CD4-positive, alpha-beta memory T cell (primary cell): ENCODE measurements at regions of chrX and their contacts with region 1.

Region 1: GRCh38 chrX:54639346-54640102 is 109.5 kb downstream of the GNL3L start:
- DNase-seq: peak; percentile 86 to 97 (median 91)
- H3K4me3 ChIP-seq: peak overlapping the region; percentile 57 to 59
- H3K4me3 Mint-ChIP-seq: peak overlapping the region; percentile 89 to 96 (median 94)
- H3K27ac ChIP-seq: peak overlapping the region; percentile 94
- H3K27ac Mint-ChIP-seq: peak overlapping the region; percentile 98 to 100 (median 99)
- H3K4me1 ChIP-seq: peaks cover 12% of the 10 kb centered on the region
- H3K4me1 Mint-ChIP-seq: peaks cover 2 to 23% (median 9%) of the 10 kb centered on the region in 4 donors
- H3K27me3 ChIP-seq: no peaks in the 10 kb centered on the region
- H3K27me3 Mint-ChIP-seq: no peaks in the 10 kb centered on the region

Region 2: DNA sequence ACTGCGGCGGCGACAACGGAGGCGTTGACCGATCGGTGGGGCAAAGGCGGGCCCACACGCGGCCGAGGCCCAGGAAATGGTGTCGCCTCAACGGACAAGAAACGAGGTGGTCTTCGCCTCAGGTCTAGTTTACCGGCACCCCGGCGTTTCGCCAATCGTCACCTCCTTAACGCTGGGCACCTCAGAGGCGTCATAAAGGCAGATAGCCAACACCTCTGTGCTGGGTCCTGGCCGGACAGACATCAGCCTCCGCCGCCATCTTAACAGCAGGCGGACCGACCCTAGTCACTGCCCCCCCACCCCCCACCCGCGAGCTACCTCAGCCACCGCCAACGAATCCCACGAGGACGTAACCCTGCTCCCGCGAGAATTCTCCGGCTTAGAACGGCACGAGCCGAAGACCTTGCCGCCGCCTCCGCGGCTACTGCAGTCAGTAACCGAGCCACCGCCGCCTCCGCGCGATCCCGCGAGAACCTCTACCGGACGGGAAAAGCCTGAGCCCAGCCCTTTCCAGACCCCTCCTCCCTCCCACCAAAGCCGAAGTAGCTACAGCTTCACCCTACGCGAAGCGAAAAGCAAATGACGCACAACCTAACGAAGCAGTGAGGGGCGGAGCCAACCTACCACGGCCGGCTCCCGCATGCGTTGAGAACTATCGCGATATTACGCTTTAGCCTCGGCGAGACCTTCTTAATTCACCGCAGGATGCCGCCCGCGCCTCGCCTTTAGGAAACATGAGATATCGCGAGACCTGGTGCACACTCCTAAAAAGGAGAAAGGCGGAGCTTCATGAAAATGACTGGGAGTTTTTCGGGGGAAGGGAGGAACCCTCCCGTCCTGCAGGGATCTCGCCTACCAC is 955.7 kb before region 1 on chrX:
- CTCF ChIA-PET with region 1: no interaction called
- POLR2A ChIA-PET with region 1: interaction called, 3 read pairs
- intact Hi-C with region 1: loop called (anchors 10 kb)
- DNase-seq: peak; percentile 88 to 97 (median 95)
- H3K4me3 ChIP-seq: peak overlapping the region; percentile 65 to 66
- H3K4me3 Mint-ChIP-seq: peak overlapping the region; percentile 88 to 97 (median 90)
- H3K27ac ChIP-seq: peak overlapping the region; percentile 94
- H3K27ac Mint-ChIP-seq: peak overlapping the region; percentile 87 to 99 (median 97)
- H3K4me1 ChIP-seq: peaks cover 41% of the 10 kb centered on the region
- H3K4me1 Mint-ChIP-seq: peaks cover 16 to 52% (median 33%) of the 10 kb centered on the region in 4 donors
- H3K27me3 ChIP-seq: no peaks in the 10 kb centered on the region
- H3K27me3 Mint-ChIP-seq: no peaks in the 10 kb centered on the region

Region 3: GRCh38 chrX:54182864-54183608 is 456.5 kb before region 1 on chrX and contains the start of gene FAM120C:
- CTCF ChIA-PET with region 1: no interaction called
- POLR2A ChIA-PET with region 1: interaction called, 20 read pairs
- intact Hi-C with region 1: loop called (anchors 2 kb)
- DNase-seq: peak; percentile 62 to 66 (median 65)
- H3K4me3 ChIP-seq: peak within 1 kb of the TSS; percentile 20 to 63
- H3K4me3 Mint-ChIP-seq: peak within 1 kb of the TSS; percentile 84 to 92 (median 86)
- H3K27ac ChIP-seq: peak within 1 kb of the TSS; percentile 72
- H3K27ac Mint-ChIP-seq: peak within 1 kb of the TSS; percentile 74 to 92 (median 89)
- H3K4me1 ChIP-seq: peaks cover 29% of the 10 kb centered on the region
- H3K4me1 Mint-ChIP-seq: peaks cover 31 to 47% (median 39%) of the 10 kb centered on the region in 4 donors
- H3K27me3 ChIP-seq: no peaks in the 10 kb centered on the region
- H3K27me3 Mint-ChIP-seq: no peaks in the 10 kb centered on the region
- total RNA-seq, gene FAM120C: 17.6 to 21.1 TPM

Region 4: DNA sequence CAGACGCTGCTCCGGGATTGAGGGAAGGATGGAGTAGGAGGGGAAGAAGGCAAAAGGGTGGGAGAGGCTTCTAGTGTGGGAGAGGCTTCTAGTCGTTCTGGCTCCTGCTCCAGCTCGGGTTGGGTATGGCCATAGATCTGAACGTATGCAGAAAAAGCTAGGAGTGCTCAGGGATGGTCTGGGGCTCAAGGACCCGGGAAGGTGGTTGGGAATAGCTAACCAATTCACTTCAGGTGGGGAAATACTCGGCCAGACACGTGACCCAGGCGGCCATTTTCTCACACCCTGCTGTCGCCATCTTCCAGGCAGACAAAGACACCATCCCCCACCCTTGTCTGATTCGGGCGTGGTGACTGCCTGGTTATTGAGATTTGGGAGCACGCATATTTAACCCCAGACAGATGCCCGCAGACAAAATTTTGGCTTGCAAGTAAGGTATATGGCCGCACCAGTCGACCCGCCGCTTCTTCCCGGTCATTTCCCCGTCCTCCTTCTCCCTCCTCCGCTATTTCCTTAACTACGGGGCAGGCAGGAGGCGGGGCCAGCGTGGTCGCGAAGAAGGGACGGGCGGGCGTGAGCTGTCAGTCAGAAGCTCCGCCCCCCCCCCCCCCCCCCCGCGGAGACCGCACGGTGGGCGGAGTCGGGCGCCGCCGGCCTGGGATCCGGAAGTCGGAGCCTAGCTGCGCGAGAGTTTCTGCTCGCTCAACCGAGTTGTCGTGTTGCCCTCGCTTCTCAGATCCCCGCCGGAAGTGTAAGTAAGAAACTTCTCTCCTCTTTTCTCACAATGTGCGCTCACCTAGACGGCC is 109.8 kb before region 1 on chrX and contains the start of gene GNL3L:
- CTCF ChIA-PET with region 1: no interaction called
- POLR2A ChIA-PET with region 1: interaction called, 44 read pairs
- intact Hi-C with region 1: loop called (anchors 1 kb)
- DNase-seq: peak; percentile 79 to 84 (median 82)
- H3K4me3 ChIP-seq: peak within 1 kb of the TSS; percentile 88 to 97
- H3K4me3 Mint-ChIP-seq: peak within 1 kb of the TSS; percentile 91 to 99 (median 95)
- H3K27ac ChIP-seq: peak within 1 kb of the TSS; percentile 73
- H3K27ac Mint-ChIP-seq: peak within 1 kb of the TSS; percentile 91 to 98 (median 96)
- H3K4me1 ChIP-seq: peaks cover 34% of the 10 kb centered on the region
- H3K4me1 Mint-ChIP-seq: peaks cover 19 to 45% (median 30%) of the 10 kb centered on the region in 4 donors
- H3K27me3 ChIP-seq: no peaks in the 10 kb centered on the region
- H3K27me3 Mint-ChIP-seq: no peaks in the 10 kb centered on the region
- total RNA-seq, gene GNL3L: 41.7 to 45.1 TPM

Region 5: DNA sequence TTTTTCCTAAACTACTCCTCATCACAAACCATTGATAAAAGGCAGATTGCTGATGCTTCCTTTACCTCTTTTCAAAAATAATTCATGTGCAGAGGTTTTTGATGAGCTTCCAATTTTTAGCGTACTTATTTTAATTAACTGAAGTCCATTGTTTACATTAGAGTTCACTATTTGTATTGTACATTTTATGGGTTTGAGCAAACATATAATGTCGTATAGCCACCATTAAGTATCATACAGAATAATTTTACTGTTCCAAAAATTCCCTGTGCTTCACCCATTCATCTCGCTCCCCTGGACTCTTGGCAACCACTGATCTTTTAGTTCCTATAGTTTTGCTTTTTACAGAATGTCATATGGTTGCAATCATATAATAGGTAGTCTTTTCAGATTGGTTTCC is 44.1 kb after region 1 on chrX:
- CTCF ChIA-PET with region 1: no interaction called
- POLR2A ChIA-PET with region 1: no interaction called
- intact Hi-C with region 1: no loop called
- DNase-seq: no peak
- H3K4me3 ChIP-seq: no peak overlapping the region
- H3K4me3 Mint-ChIP-seq: no peak overlapping the region
- H3K27ac ChIP-seq: no peak overlapping the region
- H3K27ac Mint-ChIP-seq: no peak overlapping the region
- H3K4me1 ChIP-seq: no peaks in the 10 kb centered on the region
- H3K4me1 Mint-ChIP-seq: no peaks in the 10 kb centered on the region
- H3K27me3 ChIP-seq: no peaks in the 10 kb centered on the region
- H3K27me3 Mint-ChIP-seq: peaks cover 0 to 1% of the 10 kb centered on the region in 2 donors

Region 6: GRCh38 chrX:54999717-55000598 is 360.4 kb after region 1 on chrX and contains the start of gene APEX2:
- CTCF ChIA-PET with region 1: interaction called, 4 read pairs
- POLR2A ChIA-PET with region 1: interaction called, 17 read pairs
- intact Hi-C with region 1: loop called (anchors 2 kb)
- DNase-seq: peak; percentile 83 to 91 (median 86)
- H3K4me3 ChIP-seq: peak within 1 kb of the TSS; percentile 63 to 84
- H3K4me3 Mint-ChIP-seq: peak within 1 kb of the TSS; percentile 94 to 97 (median 96)
- H3K27ac ChIP-seq: peak within 1 kb of the TSS; percentile 91
- H3K27ac Mint-ChIP-seq: peak within 1 kb of the TSS; percentile 92 to 99 (median 97)
- H3K4me1 ChIP-seq: peaks cover 17% of the 10 kb centered on the region
- H3K4me1 Mint-ChIP-seq: peaks cover 8 to 29% (median 15%) of the 10 kb centered on the region in 4 donors
- H3K27me3 ChIP-seq: no peaks in the 10 kb centered on the region
- H3K27me3 Mint-ChIP-seq: no peaks in the 10 kb centered on the region
- total RNA-seq, gene APEX2: 13.4 TPM

Region 7: DNA sequence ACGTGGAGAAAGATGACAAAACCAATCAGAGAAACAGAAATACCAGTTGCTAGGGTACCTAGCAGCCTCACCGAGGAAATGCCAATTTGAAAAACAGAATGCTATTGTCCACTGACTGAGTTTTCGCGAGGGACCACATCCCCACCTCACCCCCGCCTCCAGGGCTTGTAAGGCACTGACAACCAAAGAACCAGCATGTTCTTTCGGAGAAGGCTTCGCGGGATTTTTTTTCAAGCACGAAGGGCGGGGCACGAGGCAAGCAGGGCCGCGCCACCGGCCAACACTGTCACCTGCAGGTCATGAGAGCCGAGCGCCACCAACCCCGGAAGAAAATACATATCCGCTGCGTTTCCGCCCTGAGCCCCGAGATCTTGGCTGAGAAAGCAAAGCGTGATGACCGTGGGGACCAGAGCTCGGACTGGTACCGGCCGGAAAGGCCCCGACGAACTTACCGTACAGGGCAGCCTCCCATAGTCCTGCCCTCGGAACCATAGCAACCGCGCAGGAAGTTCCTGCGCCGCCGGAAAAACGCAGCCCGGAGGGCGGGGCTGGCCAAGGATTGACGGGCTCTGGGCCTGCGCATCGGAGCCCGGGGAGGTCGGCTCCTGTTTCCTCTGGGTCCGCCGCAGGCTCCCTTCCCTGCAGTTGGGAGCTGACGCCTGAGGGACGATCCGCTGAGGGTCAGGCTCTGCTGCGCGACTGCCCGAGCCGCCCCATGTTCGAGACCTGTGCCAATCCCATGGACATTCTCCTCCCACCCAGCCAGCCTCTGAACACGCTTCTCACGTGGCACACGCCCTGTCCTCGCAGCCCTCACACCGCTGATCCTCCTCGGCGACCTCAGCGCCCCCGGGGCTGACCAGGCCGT is 521.4 kb after region 1 on chrX:
- CTCF ChIA-PET with region 1: interaction called, 3 read pairs
- POLR2A ChIA-PET with region 1: interaction called, 9 read pairs
- intact Hi-C with region 1: loop called (anchors 1 kb)
- DNase-seq: peak; percentile 90 to 94 (median 91)
- H3K4me3 ChIP-seq: peak overlapping the region; percentile 39 to 80
- H3K4me3 Mint-ChIP-seq: peak overlapping the region; percentile 85 to 94 (median 92)
- H3K27ac ChIP-seq: peak overlapping the region; percentile 92
- H3K27ac Mint-ChIP-seq: peak overlapping the region; percentile 93 to 100 (median 98)
- H3K4me1 ChIP-seq: peaks cover 17% of the 10 kb centered on the region
- H3K4me1 Mint-ChIP-seq: peaks cover 4 to 23% (median 10%) of the 10 kb centered on the region in 4 donors
- H3K27me3 ChIP-seq: no peaks in the 10 kb centered on the region
- H3K27me3 Mint-ChIP-seq: no peaks in the 10 kb centered on the region